Naive thymus-derived CD4-positive, alpha-beta T cell (primary cell): ENCODE measurements at regions of chr3 and their contacts with region 1.

Region 1: DNA sequence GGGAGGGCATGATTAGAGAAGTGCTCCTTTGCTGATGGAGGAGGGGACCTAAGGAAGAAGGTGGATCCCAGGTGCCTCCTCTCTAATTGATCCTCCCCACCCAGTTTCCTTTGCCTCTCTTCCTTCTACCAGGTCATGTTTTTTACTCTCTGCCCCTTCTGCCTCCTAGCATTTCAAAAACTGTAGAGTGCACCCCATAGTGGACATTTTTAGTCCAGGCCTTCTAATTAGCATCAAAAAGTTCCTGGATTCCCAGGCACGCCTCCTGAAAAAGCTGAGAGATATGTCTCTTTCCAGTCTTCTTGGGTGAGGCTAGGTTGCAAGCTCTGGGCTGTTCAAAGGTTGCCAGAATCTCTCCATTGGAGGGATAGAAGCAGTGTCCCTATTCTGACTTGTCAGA is 18.7 kb upstream of the ITGB5 start:
- DNase-seq: no peak
- ATAC-seq: no peak
- H3K4me3 ChIP-seq: no peak overlapping the region
- H3K4me3 Mint-ChIP-seq: no peak overlapping the region
- H3K27ac ChIP-seq: no peak overlapping the region
- H3K27ac Mint-ChIP-seq: no peak overlapping the region
- H3K4me1 ChIP-seq: peaks cover 0 to 3% of the 10 kb centered on the region in 2 donors
- H3K4me1 Mint-ChIP-seq: peaks cover 0 to 5% (median 2%) of the 10 kb centered on the region in 7 donors
- H3K27me3 ChIP-seq: no peaks in the 10 kb centered on the region
- H3K27me3 Mint-ChIP-seq: peaks cover 4 to 29% (median 14%) of the 10 kb centered on the region in 5 donors

Region 2: DNA sequence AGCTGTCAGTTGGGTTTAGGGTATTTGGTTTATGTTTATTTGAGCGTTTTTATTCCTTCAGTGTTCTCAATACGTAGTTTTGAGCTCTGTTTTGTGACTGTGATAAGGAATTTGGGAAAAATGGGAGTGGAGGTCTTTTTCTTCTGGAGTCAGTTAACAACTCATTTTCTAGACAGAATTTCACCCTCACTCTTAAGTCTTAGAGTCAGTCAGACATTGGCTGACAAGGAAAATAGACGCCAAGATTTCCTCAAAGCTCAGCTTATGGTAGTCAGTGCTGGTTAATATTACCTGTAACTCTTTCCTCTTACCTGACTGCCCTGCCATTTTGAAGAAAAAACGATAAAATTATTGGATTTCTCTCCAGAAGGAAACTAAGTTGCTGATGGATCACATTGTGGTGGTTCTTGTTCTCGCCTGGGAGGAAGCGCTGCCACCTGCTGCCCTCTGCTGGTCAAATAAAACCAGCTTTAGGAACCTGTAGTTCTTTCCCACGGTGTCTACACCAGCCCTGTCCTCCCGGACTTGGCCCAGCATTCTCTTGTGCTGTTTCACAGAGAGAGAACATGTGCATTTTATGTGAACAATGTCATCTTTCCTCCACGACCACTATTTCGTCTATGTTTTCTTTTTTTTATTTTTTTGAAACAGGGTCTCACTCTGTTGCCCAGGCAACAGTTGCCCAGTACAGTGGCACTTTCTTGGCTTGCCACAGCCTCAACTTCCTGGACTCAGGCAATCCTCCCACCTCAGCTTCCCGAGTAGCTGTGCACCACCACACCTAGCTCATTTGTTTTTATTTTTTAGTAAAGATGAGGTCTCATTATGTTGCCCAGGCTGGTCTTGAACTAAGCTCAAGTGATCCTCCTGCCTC is 217.0 kb before region 1 on chr3:
- CTCF ChIA-PET with region 1: interaction called, 4 read pairs
- POLR2A ChIA-PET with region 1: no interaction called
- intact Hi-C with region 1: loop called in 1 of 2 experiments (anchors 2 kb)
- DNase-seq: peak; percentile 26 to 69 (median 49)
- ATAC-seq: peak; percentile 90
- H3K4me3 ChIP-seq: no peak overlapping the region
- H3K4me3 Mint-ChIP-seq: no peak overlapping the region
- H3K27ac ChIP-seq: no peak overlapping the region
- H3K27ac Mint-ChIP-seq: no peak overlapping the region
- H3K4me1 ChIP-seq: no peaks in the 10 kb centered on the region
- H3K4me1 Mint-ChIP-seq: peaks cover 0 to 7% (median 2%) of the 10 kb centered on the region in 7 donors
- H3K27me3 ChIP-seq: peaks cover 0 to 4% of the 10 kb centered on the region in 2 donors
- H3K27me3 Mint-ChIP-seq: peaks cover 0 to 56% (median 18%) of the 10 kb centered on the region in 5 donors

Region 3: DNA sequence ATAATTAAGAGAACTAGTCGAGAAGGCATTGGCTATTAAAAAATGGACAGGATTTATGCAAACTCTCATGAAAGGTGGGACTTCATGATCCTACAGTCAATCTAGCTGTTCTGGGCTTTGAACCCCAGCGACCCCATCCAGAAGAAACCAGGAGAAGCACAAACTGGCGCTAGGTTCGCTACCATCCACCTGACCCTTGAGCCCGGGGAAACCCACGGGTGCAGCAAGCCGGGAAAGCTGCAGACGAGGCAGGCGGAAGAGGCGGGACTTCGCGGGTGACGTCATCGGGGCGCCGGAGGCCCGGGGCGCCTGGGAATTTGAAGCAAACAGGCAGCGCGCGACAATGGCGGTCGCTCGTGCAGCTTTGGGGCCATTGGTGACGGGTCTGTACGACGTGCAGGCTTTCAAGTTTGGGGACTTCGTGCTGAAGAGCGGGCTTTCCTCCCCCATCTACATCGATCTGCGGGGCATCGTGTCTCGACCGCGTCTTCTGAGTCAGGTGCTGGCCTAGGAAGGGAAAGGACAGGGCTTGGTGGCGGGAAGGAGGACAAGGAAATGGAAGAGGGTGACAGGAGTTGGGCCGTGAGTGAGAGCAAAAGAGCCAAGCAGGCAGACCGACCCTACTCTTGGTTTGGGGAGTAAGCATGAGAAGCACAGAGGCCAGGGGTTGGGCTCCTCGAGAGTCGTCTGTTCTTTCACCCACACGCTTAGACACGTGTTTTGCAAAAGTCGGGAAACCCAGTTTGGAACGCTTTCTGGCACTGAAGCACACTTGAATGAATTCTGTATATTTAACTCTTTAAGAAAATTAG is 175.5 kb before region 1 on chr3 and contains the start of gene UMPS:
- CTCF ChIA-PET with region 1: no interaction called
- POLR2A ChIA-PET with region 1: no interaction called
- intact Hi-C with region 1: no loop called
- DNase-seq: peak; percentile 85 to 94 (median 91)
- ATAC-seq: peak; percentile 97
- H3K4me3 ChIP-seq: peak within 1 kb of the TSS; percentile 78
- H3K4me3 Mint-ChIP-seq: peak within 1 kb of the TSS; percentile 93 to 100 (median 98)
- H3K27ac ChIP-seq: peak within 1 kb of the TSS; percentile 77
- H3K27ac Mint-ChIP-seq: peak within 1 kb of the TSS; percentile 96 to 100 (median 98)
- H3K4me1 ChIP-seq: peaks cover 11 to 32% of the 10 kb centered on the region in 2 donors
- H3K4me1 Mint-ChIP-seq: peaks cover 20 to 51% (median 48%) of the 10 kb centered on the region in 7 donors
- H3K27me3 ChIP-seq: peaks cover 0 to 4% of the 10 kb centered on the region in 2 donors
- H3K27me3 Mint-ChIP-seq: peaks cover 9 to 27% (median 19%) of the 10 kb centered on the region in 5 donors
- total RNA-seq, gene UMPS: 13.2 to 34.8 (median 24.8) TPM

Region 4: GRCh38 chr3:124761250-124761796 is 144.5 kb before region 1 on chr3:
- CTCF ChIA-PET with region 1: interaction called, 73 read pairs
- POLR2A ChIA-PET with region 1: no interaction called
- intact Hi-C with region 1: loop called (anchors 1 kb)
- DNase-seq: peak; percentile 52 to 76 (median 68)
- ATAC-seq: peak; percentile 92
- H3K4me3 ChIP-seq: no peak overlapping the region
- H3K4me3 Mint-ChIP-seq: peak overlapping the region in 9 of 10 donors; percentile 16 to 84 (median 72)
- H3K27ac ChIP-seq: no peak overlapping the region
- H3K27ac Mint-ChIP-seq: peak overlapping the region in 3 of 9 donors; percentile 5 to 92 (median 65)
- H3K4me1 ChIP-seq: no peaks in the 10 kb centered on the region
- H3K4me1 Mint-ChIP-seq: peaks cover 0 to 7% (median 5%) of the 10 kb centered on the region in 7 donors
- H3K27me3 ChIP-seq: no peaks in the 10 kb centered on the region
- H3K27me3 Mint-ChIP-seq: peaks cover 0 to 1% (median 0%) of the 10 kb centered on the region in 5 donors

Region 5: DNA sequence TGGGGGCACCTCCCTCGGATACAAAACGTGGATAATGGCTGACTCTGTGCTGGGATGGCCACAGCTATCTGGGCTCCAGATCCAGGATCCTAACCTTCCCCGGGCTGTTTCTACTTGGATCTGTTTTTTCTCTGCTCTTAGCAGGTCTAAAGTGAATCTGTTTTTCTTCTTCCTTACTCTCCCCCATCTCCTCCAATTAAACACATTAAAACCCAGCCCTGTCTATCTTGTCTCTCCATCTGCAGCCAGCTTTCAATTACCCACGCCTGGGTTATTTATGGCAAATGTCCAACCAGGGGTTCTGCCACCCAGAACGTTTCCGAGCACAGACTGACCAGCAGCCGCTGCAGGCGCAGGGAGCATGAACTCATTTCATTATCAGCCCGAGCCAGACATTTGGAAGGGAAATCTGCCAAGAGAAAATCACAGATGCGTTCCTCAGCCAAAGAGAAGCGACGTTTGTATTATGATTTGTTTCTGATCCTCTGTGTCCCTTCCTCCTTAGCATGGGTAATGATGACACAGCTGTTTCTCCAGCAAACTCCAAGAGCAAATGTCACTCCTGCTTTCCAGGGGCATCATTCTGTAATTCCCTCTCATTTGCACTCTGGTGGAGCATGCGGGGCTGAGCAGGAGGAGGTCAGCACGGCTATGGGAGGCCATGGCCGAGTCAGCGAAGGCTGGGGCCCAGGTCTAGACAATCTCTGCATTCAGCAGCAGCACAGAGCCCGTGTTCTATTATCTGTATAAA is 133.6 kb before region 1 on chr3:
- CTCF ChIA-PET with region 1: interaction called, 10 read pairs
- POLR2A ChIA-PET with region 1: no interaction called
- intact Hi-C with region 1: no loop called
- DNase-seq: no peak
- ATAC-seq: no peak
- H3K4me3 ChIP-seq: no peak overlapping the region
- H3K4me3 Mint-ChIP-seq: no peak overlapping the region
- H3K27ac ChIP-seq: no peak overlapping the region
- H3K27ac Mint-ChIP-seq: no peak overlapping the region
- H3K4me1 ChIP-seq: no peaks in the 10 kb centered on the region
- H3K4me1 Mint-ChIP-seq: no peaks in the 10 kb centered on the region
- H3K27me3 ChIP-seq: no peaks in the 10 kb centered on the region
- H3K27me3 Mint-ChIP-seq: peaks cover 0 to 29% (median 18%) of the 10 kb centered on the region in 5 donors

Region 6: DNA sequence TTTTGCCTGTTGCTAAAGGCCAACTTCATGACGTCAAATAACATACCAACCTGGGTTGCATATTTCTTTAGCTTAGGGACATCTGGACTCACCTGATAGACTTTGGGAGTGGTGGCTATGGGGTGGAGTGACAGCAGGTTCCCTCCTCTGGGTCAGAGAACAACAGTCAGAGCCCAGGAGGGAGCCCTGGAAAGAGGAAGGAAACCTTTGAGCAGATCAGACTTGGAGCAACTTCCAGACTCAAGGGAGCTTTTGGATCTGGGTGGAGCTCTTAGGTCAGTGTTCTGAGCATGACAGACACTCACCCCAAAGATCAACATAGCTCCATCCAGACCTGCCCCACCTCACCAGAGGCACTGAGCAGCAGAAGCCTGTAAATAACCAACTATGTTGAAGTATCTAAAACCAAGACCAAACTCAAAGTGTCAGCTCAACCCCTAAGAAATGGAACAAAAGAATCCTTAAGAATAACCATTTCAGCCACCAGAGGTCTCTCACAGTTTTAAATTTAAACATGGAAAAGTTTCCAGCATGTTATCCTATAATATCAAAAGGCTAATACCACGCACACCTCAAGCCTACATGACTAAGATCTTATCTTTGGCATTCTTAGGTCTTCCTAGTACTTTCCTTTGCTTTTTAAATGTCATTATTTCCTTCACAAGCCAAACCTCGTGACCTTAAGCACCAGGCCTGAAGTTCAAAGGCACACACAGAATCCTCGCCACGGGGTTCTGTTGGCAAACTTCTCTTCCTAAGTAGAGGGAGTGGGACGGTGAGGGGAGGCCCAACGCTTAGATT is 119.2 kb before region 1 on chr3:
- CTCF ChIA-PET with region 1: interaction called, 9 read pairs
- POLR2A ChIA-PET with region 1: no interaction called
- intact Hi-C with region 1: loop called in 1 of 2 experiments (anchors 1 kb)
- DNase-seq: no peak
- ATAC-seq: no peak
- H3K4me3 ChIP-seq: no peak overlapping the region
- H3K4me3 Mint-ChIP-seq: no peak overlapping the region
- H3K27ac ChIP-seq: no peak overlapping the region
- H3K27ac Mint-ChIP-seq: peak overlapping the region in 1 of 9 donors; percentile 29
- H3K4me1 ChIP-seq: no peaks in the 10 kb centered on the region
- H3K4me1 Mint-ChIP-seq: peaks cover 0 to 17% (median 2%) of the 10 kb centered on the region in 7 donors
- H3K27me3 ChIP-seq: no peaks in the 10 kb centered on the region
- H3K27me3 Mint-ChIP-seq: peaks cover 0 to 7% (median 4%) of the 10 kb centered on the region in 5 donors

Region 7: GRCh38 chr3:124834723-124835718 is 70.8 kb before region 1 on chr3:
- CTCF ChIA-PET with region 1: no interaction called
- POLR2A ChIA-PET with region 1: no interaction called
- intact Hi-C with region 1: loop called in 1 of 2 experiments (anchors 1 kb)
- DNase-seq: peak in 8 of 9 donors; percentile 18 to 58 (median 41)
- ATAC-seq: peak; percentile 86
- H3K4me3 ChIP-seq: peak overlapping the region; percentile 46
- H3K4me3 Mint-ChIP-seq: peak overlapping the region; percentile 82 to 93 (median 86)
- H3K27ac ChIP-seq: no peak overlapping the region
- H3K27ac Mint-ChIP-seq: peak overlapping the region; percentile 39 to 89 (median 77)
- H3K4me1 ChIP-seq: peaks cover 6 to 9% of the 10 kb centered on the region in 2 donors
- H3K4me1 Mint-ChIP-seq: peaks cover 13 to 21% (median 17%) of the 10 kb centered on the region in 7 donors
- H3K27me3 ChIP-seq: no peaks in the 10 kb centered on the region
- H3K27me3 Mint-ChIP-seq: peaks cover 2 to 49% (median 12%) of the 10 kb centered on the region in 5 donors